Naive thymus-derived CD8-positive, alpha-beta T cell (primary cell): ENCODE measurements at regions of chr15 and their contacts with region 1.

Region 1: GRCh38 chr15:64893481-64894394 is 18.0 kb upstream of the ANKDD1A start:
- DNase-seq: peak; percentile 87 to 99 (median 94)
- ATAC-seq: peak; percentile 73 to 83
- H3K4me3 Mint-ChIP-seq: peak overlapping the region; percentile 80 to 94 (median 90)
- H3K27ac Mint-ChIP-seq: peak overlapping the region; percentile 94 to 99 (median 98)
- H3K4me1 Mint-ChIP-seq: peaks cover 37 to 73% (median 64%) of the 10 kb centered on the region in 4 donors
- H3K27me3 Mint-ChIP-seq: no peaks in the 10 kb centered on the region

Region 2: DNA sequence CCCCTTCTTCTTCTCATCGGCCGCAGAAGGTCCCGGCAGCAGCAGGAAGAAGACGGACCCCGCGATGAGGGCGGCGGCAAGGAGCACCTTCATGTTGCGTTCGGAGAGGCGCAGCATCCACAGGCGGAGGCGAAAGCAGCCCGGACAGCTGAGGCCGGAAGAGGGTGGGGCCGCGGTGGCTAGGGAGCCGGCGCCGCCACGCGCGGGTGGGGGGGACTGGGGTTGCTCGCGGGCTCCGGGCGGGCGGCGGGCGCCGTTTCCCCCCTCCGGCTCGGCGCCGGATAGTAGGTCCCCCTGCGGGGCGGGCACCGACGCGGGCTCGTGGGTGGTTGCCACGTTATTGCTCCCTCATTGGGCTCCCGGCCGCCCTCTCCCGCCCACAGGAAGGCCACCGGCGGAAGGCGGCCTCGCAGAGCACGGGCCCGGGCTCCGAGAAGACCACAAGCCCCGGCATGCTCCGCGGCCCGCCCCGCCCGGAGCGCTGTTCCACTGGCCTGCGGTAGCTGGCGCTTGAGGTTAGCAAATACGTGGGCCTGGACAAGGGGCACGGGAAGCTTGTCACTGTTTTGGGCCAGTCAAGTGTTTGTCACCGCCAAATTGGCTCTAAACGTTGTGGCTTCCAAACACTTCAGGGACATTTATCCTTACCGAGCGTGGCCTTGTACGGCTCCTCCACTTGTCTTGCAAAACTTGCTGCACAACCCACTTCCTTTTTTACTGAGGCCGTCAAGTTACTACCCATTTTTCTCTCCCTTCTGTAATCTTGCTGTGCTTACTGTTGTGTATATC is 730.7 kb before region 1 on chr15 and contains the start of gene PPIB:
- POLR2A ChIA-PET with region 1: interaction called, 13 read pairs
- DNase-seq: peak; percentile 89 to 97 (median 94)
- ATAC-seq: peak; percentile 94 to 95
- H3K4me3 Mint-ChIP-seq: peak within 1 kb of the TSS; percentile 83 to 99 (median 89)
- H3K27ac Mint-ChIP-seq: peak within 1 kb of the TSS; percentile 90 to 99 (median 94)
- H3K4me1 Mint-ChIP-seq: peaks cover 21 to 49% (median 40%) of the 10 kb centered on the region in 4 donors
- H3K27me3 Mint-ChIP-seq: no peaks in the 10 kb centered on the region
- polyA plus RNA-seq, gene PPIB: 431 to 581 (median 521) TPM

Region 3: GRCh38 chr15:64387562-64388168 is 506.1 kb before region 1 on chr15 and contains the start of gene TRIP4:
- POLR2A ChIA-PET with region 1: interaction called, 10 read pairs
- DNase-seq: peak; percentile 88 to 97 (median 96)
- ATAC-seq: peak; percentile 98 to 99
- H3K4me3 Mint-ChIP-seq: peak within 1 kb of the TSS; percentile 89 to 100 (median 99)
- H3K27ac Mint-ChIP-seq: peak within 1 kb of the TSS; percentile 93 to 97 (median 95)
- H3K4me1 Mint-ChIP-seq: peaks cover 11 to 22% (median 20%) of the 10 kb centered on the region in 4 donors
- H3K27me3 Mint-ChIP-seq: no peaks in the 10 kb centered on the region
- polyA plus RNA-seq, gene TRIP4: 19.7 to 24.3 (median 24.2) TPM

Region 4: GRCh38 chr15:64825431-64826294 is 68.1 kb before region 1 on chr15 and contains the start of gene PIF1:
- POLR2A ChIA-PET with region 1: interaction called, 19 read pairs
- DNase-seq: peak; percentile 57 to 94 (median 86)
- ATAC-seq: peak; percentile 95 to 98
- H3K4me3 Mint-ChIP-seq: peak within 1 kb of the TSS; percentile 82 to 94 (median 91)
- H3K27ac Mint-ChIP-seq: peak within 1 kb of the TSS in 9 of 10 donors; percentile 57 to 85 (median 72)
- H3K4me1 Mint-ChIP-seq: peaks cover 18 to 34% (median 30%) of the 10 kb centered on the region in 4 donors
- H3K27me3 Mint-ChIP-seq: peaks cover 3 to 32% (median 13%) of the 10 kb centered on the region in 5 donors
- polyA plus RNA-seq, gene PIF1: 0.15 to 0.68 TPM in 2 of 3 donors, not detected in the other

Region 5: GRCh38 chr15:64836023-64836536 is 57.7 kb before region 1 on chr15:
- POLR2A ChIA-PET with region 1: interaction called, 77 read pairs
- DNase-seq: no peak
- ATAC-seq: no peak
- H3K4me3 Mint-ChIP-seq: peak overlapping the region; percentile 58 to 80 (median 72)
- H3K27ac Mint-ChIP-seq: peak overlapping the region; percentile 24 to 90 (median 86)
- H3K4me1 Mint-ChIP-seq: peaks cover 34 to 55% (median 53%) of the 10 kb centered on the region in 4 donors
- H3K27me3 Mint-ChIP-seq: no peaks in the 10 kb centered on the region

Region 6: GRCh38 chr15:64841258-64842095 is 52.3 kb before region 1 on chr15 and contains the start of gene PLEKHO2:
- POLR2A ChIA-PET with region 1: interaction called, 77 read pairs
- DNase-seq: peak; percentile 77 to 96 (median 82)
- ATAC-seq: peak; percentile 76 to 78
- H3K4me3 Mint-ChIP-seq: peak within 1 kb of the TSS; percentile 81 to 99 (median 93)
- H3K27ac Mint-ChIP-seq: peak within 1 kb of the TSS; percentile 82 to 96 (median 93)
- H3K4me1 Mint-ChIP-seq: peaks cover 52 to 87% (median 83%) of the 10 kb centered on the region in 4 donors
- H3K27me3 Mint-ChIP-seq: no peaks in the 10 kb centered on the region
- polyA plus RNA-seq, gene PLEKHO2: 8.9 to 19.3 (median 12.0) TPM

Region 7: DNA sequence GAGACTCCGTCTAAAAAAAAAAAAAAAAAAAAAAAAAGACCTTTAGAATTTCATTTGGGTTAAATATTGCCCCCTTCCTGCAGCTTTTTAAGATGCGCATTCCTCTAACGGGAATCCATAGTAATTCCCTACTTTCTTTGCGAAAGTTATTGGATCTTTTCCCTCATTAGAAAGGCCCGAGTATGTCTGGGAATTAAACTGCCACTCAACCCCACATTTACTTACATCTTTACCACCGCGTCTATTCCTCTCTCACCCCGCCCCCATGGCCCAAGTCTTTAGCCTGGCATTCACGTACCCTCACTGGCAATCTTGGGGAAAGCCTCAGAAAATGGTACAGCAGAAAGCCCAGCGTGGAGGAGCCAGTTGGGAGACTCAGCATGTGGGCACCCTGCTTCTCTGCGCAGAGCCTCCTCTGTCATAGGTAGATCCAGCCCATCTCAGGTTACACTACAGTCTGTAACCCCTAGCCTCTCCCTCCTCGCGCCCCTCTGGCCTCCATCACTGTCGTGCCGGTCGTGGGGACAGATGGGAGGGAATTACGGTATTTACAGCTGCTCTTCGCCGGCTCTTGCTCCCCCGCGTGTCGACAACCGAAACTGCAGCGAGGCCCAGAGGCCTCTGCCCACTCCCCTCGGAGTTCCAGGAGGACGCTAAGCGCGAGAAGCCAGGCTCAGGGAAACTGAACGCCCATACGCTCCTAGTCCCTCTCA is 11.5 kb after region 1 on chr15:
- POLR2A ChIA-PET with region 1: interaction called, 24 read pairs
- DNase-seq: peak; percentile 60 to 86 (median 76)
- ATAC-seq: peak; percentile 68 to 89
- H3K4me3 Mint-ChIP-seq: peak overlapping the region; percentile 30 to 84 (median 74)
- H3K27ac Mint-ChIP-seq: peak overlapping the region in 6 of 10 donors; percentile 33 to 95 (median 42)
- H3K4me1 Mint-ChIP-seq: peaks cover 18 to 45% (median 36%) of the 10 kb centered on the region in 4 donors
- H3K27me3 Mint-ChIP-seq: peaks cover 0 to 11% (median 0%) of the 10 kb centered on the region in 5 donors

Region 8: DNA sequence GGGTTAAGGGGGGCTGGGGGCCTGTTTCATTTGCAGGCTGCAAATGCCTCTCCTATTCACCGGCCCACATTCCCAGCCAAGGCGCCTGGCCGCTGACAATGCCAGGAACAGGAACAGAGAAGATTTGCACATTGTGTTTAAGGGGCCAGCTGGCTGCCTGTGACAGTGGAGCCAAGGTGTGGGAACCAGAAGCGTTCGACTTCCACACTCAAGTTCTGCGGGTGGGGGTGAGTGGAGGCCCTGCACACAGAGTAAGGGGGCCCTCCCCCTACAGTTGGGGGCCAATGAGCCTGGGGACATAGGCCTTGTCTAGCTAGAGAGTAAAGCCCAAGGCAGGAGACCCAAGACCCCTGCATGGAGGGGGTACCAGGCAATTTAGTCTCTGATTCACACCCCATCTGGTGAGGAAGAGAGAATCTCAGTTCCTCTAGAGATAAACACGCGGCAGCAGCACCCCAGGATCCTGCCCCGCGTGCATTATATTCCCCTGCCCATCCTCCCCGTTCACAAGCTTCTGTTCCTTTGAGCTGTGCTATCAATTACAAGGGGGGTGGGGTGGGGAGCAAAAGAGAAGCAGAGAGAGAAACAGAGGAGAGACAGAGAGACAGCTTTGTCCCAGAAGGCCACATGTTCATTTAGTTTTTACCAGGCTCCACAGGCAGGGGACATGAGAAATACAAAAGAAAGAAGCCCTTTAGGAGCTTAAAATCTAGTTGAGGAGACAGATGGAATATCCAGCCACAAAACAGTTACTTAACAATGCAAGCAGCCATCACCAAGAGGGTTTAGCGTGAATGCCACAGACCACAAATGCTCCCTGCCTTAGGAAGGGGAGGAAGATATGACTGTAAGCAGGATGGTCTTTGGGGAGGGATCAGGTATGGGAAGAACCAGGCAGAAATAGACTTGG is 474.8 kb after region 1 on chr15:
- POLR2A ChIA-PET with region 1: no interaction called
- DNase-seq: no peak
- ATAC-seq: no peak
- H3K4me3 Mint-ChIP-seq: no peak overlapping the region
- H3K27ac Mint-ChIP-seq: no peak overlapping the region
- H3K4me1 Mint-ChIP-seq: peaks cover 0 to 7% (median 0%) of the 10 kb centered on the region in 4 donors
- H3K27me3 Mint-ChIP-seq: peaks cover 0 to 10% (median 9%) of the 10 kb centered on the region in 5 donors